CD8-positive, alpha-beta T cell (primary cell): ENCODE measurements at regions of chr11 and their contacts with region 1.

Region 1: DNA sequence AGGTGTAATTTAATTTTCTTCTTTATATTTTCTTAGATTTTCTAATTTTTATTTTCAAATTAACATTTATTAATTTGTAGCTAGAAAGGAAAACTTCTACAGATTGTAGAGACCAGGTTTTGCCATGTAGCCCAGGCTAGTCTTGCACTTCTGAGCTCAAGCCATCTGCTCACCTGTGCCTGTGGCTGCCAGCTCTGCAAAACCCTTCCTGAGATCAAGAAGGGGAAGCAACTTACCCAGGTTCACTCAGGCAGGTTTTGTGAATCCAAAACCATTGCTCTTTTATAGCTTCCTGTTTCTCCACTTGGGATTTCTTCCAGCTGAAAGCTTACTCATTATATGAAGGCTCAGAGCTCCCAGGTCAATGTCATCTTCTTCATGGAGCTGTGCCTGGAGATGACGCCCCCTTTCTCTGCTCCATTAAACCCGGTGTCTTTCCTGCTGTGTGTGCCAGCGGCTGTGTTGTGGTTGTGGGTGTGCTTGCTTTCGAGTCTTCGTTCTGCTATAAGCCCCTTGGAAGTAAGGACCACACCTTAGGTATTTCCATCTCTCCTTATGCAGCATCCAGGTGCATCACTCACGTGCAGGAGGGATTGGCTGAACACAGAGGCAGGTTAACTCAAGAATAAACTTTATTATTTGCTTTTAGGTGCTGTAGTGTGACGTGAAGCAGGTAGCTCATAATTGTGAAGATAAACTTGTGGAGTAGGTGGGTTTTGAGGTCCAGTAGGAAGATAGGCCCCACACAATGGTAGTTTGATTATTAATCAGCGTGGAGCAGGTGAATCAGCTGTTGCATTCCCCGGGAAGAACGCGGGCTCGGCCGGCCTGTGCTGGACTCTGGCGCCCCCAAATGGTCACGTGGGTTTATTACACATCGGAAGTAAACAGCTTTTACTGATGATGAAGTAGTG is 42.2 kb upstream of the INCENP start:
- DNase-seq: peak; percentile 66 to 89 (median 80)
- ATAC-seq: peak; percentile 92
- H3K4me3 ChIP-seq: no peak overlapping the region
- H3K4me3 Mint-ChIP-seq: peak overlapping the region; percentile 59
- H3K27ac ChIP-seq: no peak overlapping the region
- H3K27ac Mint-ChIP-seq: peak overlapping the region; percentile 37
- H3K4me1 ChIP-seq: no peaks in the 10 kb centered on the region
- H3K4me1 Mint-ChIP-seq: peaks cover 7% of the 10 kb centered on the region
- H3K27me3 ChIP-seq: no peaks in the 10 kb centered on the region
- H3K27me3 Mint-ChIP-seq: no peaks in the 10 kb centered on the region
- CTCF ChIP-seq: peak; percentile 94

Region 2: DNA sequence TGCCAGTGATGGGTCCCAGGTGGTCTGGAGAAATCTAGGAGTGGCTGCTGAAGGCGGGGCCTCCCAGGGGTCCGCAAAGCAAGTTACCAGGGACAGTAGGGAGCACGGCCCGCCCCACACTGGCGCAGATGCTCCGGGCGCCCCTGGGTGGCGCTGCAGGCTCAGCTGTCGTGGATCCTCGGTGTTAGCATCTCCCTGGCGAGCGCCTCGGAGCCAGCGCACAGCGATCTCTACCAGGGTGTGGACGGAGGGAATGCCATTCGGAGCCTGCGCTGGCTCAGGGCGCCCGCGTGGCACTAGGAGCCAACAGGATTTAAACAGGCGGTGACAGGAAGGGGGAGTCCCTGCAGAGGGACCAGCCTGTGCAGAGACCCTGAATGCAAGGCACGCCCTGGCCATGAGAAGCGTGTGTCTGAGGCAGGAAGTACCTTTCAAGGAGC is 210.5 kb before region 1 on chr11:
- CTCF ChIA-PET with region 1: interaction called, 18 read pairs
- POLR2A ChIA-PET with region 1: no interaction called
- intact Hi-C with region 1: loop called (anchors 1 kb)
- DNase-seq: peak; percentile 30 to 74 (median 64)
- ATAC-seq: peak; percentile 94
- H3K4me3 ChIP-seq: no peak overlapping the region
- H3K4me3 Mint-ChIP-seq: peak overlapping the region; percentile 64
- H3K27ac ChIP-seq: no peak overlapping the region
- H3K27ac Mint-ChIP-seq: no peak overlapping the region
- H3K4me1 ChIP-seq: no peaks in the 10 kb centered on the region
- H3K4me1 Mint-ChIP-seq: peaks cover 3% of the 10 kb centered on the region
- H3K27me3 ChIP-seq: no peaks in the 10 kb centered on the region
- H3K27me3 Mint-ChIP-seq: no peaks in the 10 kb centered on the region
- CTCF ChIP-seq: peak; percentile 89

Region 3: DNA sequence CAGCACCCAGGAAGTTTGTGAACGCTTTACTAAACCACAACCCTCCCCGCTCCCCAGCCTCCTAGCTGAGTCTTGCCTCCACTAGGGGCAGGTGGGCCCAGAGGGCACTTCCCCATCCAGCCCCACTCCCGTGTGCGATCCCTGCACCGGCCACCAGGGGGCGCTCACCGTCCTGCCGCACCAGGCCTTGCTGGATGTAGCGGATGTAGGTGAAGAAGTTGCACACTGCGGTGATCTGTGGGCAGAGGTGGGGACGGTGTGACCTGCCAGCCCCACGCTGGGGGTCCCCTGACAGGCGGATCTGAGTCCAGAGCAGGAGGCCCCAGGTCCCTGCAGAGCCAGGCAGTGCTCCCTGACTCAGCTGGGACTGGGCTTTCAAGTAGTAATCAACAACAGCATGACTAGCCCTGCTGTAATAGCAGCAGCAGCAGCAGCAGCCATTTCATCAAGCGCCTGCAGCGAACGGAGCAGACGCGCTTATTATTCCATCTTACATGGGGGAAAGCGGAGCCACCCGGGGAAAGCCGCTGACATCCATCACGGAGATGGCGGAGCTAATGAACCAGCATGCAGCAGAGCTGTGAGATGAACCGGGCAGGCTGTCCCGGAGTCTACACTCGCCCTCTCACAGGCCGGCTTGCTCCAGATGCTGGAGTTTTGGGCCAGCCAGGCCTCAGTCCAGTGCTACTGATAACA is 182.3 kb before region 1 on chr11:
- CTCF ChIA-PET with region 1: interaction called, 356 read pairs
- POLR2A ChIA-PET with region 1: interaction called, 11 read pairs
- intact Hi-C with region 1: loop called (anchors 1 kb)
- DNase-seq: peak; percentile 89 to 98 (median 92)
- ATAC-seq: peak; percentile 96
- H3K4me3 ChIP-seq: no peak overlapping the region
- H3K4me3 Mint-ChIP-seq: no peak overlapping the region
- H3K27ac ChIP-seq: no peak overlapping the region
- H3K27ac Mint-ChIP-seq: peak overlapping the region; percentile 3
- H3K4me1 ChIP-seq: peaks cover 5% of the 10 kb centered on the region
- H3K4me1 Mint-ChIP-seq: peaks cover 6% of the 10 kb centered on the region
- H3K27me3 ChIP-seq: no peaks in the 10 kb centered on the region
- H3K27me3 Mint-ChIP-seq: peaks cover 5% of the 10 kb centered on the region
- CTCF ChIP-seq: peak; percentile 98

Region 4: GRCh38 chr11:61967116-61967923 is 114.3 kb before region 1 on chr11 and contains the start of gene FTH1:
- CTCF ChIA-PET with region 1: interaction called, 18 read pairs
- POLR2A ChIA-PET with region 1: interaction called, 3 read pairs
- intact Hi-C with region 1: loop called (anchors 1 kb)
- DNase-seq: peak; percentile 82 to 95 (median 91)
- ATAC-seq: peak; percentile 74
- H3K4me3 ChIP-seq: peak within 1 kb of the TSS; percentile 98 to 100
- H3K4me3 Mint-ChIP-seq: peak within 1 kb of the TSS; percentile 96
- H3K27ac ChIP-seq: peak within 1 kb of the TSS; percentile 72 to 96
- H3K27ac Mint-ChIP-seq: peak within 1 kb of the TSS; percentile 98
- H3K4me1 ChIP-seq: peaks cover 43% of the 10 kb centered on the region
- H3K4me1 Mint-ChIP-seq: peaks cover 59% of the 10 kb centered on the region
- H3K27me3 ChIP-seq: no peaks in the 10 kb centered on the region
- H3K27me3 Mint-ChIP-seq: no peaks in the 10 kb centered on the region
- CTCF ChIP-seq: no peak
- total RNA-seq, gene FTH1: 2,788 to 2,859 TPM

Region 5: GRCh38 chr11:62069986-62070919 is 11.4 kb before region 1 on chr11:
- CTCF ChIA-PET with region 1: interaction called, 39 read pairs
- POLR2A ChIA-PET with region 1: no interaction called
- intact Hi-C with region 1: no loop called
- DNase-seq: no peak
- ATAC-seq: no peak
- H3K4me3 ChIP-seq: no peak overlapping the region
- H3K4me3 Mint-ChIP-seq: no peak overlapping the region
- H3K27ac ChIP-seq: no peak overlapping the region
- H3K27ac Mint-ChIP-seq: no peak overlapping the region
- H3K4me1 ChIP-seq: no peaks in the 10 kb centered on the region
- H3K4me1 Mint-ChIP-seq: no peaks in the 10 kb centered on the region
- H3K27me3 ChIP-seq: no peaks in the 10 kb centered on the region
- H3K27me3 Mint-ChIP-seq: peaks cover 9% of the 10 kb centered on the region
- CTCF ChIP-seq: no peak